Activated T-helper 2 cell treated with anti-CD3 and anti-CD28 coated beads, Interferon-gamma antibody, Interleukin-2, Interleukin-4, amounts not matched to agents 10 μg/mL and 5 μg/mL and 100 μg/mL, durations not matched to agents 14 hours and 24 hours and 36 hours (primary cell): ENCODE measurements at regions of chr14 and their contacts with region 1.

Region 1: DNA sequence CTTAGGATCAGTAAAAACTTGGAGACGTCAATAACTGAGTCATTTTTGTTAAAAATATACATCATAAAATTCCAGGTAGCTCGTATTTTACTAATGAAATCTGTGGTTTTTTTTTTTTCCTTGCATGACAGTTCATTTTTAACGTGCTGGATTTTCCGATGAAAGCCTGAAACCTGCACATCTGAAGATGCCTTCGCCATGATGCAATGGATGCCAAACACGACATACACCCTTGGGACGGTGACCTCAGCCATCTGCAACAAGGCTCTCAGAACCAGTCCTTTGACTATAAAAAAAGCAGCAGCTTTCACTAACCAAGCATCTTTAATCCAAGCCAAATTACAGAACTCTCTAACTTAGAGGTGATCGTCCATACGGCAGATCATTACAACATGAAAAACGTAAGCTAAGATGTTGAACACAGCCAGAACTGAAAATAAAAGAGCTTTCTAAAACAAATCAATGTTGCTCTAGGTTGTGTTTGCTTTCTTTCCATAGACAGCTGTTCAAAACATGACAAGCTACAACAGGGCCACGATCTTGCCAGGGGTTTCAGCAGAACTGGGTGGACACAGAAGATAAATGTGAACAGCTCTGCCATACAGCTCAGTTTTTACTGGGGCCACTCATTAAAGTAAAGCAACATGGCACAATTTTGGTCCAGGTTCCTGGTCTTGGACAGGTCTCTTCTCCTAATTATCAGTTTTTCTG is 7.8 kb downstream of the NIN start:
- DNase-seq: no peak
- H3K4me3 Mint-ChIP-seq: peak overlapping the region; percentile 69
- H3K27ac Mint-ChIP-seq: peak overlapping the region; percentile 77
- H3K4me1 Mint-ChIP-seq: peaks cover 68% of the 10 kb centered on the region
- H3K27me3 Mint-ChIP-seq: no peaks in the 10 kb centered on the region

Region 2: GRCh38 chr14:50697659-50698290 is 125.4 kb before region 1 on chr14:
- intact Hi-C with region 1: no loop called
- DNase-seq: no peak
- H3K4me3 Mint-ChIP-seq: no peak overlapping the region
- H3K27ac Mint-ChIP-seq: no peak overlapping the region
- H3K4me1 Mint-ChIP-seq: no peaks in the 10 kb centered on the region
- H3K27me3 Mint-ChIP-seq: peaks cover 19% of the 10 kb centered on the region

Region 3: GRCh38 chr14:50785457-50786063 is 37.6 kb before region 1 on chr14:
- intact Hi-C with region 1: loop called (anchors 5 kb)
- DNase-seq: no peak
- H3K4me3 Mint-ChIP-seq: no peak overlapping the region
- H3K27ac Mint-ChIP-seq: peak overlapping the region; percentile 70
- H3K4me1 Mint-ChIP-seq: peaks cover 39% of the 10 kb centered on the region
- H3K27me3 Mint-ChIP-seq: no peaks in the 10 kb centered on the region